K562 (cell line): ENCODE measurements at regions of chr10 and their contacts with region 1.

Region 1: GRCh38 chr10:104353325-104354048 is at the start of gene CFAP58:
- DNase-seq: peak; percentile 91 to 94 (median 92)
- ATAC-seq: peak; percentile 98
- H3K4me3 ChIP-seq: peak within 1 kb of the TSS; percentile 56
- H3K27ac ChIP-seq: peak within 1 kb of the TSS; percentile 53; the same call in 1 of the 3 replicates
- H3K4me1 ChIP-seq: peaks cover 5 to 24% of the 10 kb centered on the region in 2 experiments
- H3K27me3 ChIP-seq: no peaks in the 10 kb centered on the region
- CTCF ChIP-seq: peak; percentile 57 to 79 (median 76); a peak in 5 of 6 replicates
- EP300 ChIP-seq: no peak
- POLR2A ChIP-seq: peak; percentile 51; the same call in 1 of the 2 replicates
- RAD21 ChIP-seq: peak in 1 of 2 experiments; percentile 16; a peak in 1 of 4 replicates
- polyA plus RNA-seq, gene CFAP58: 0.08 to 0.52 TPM

Region 2: DNA sequence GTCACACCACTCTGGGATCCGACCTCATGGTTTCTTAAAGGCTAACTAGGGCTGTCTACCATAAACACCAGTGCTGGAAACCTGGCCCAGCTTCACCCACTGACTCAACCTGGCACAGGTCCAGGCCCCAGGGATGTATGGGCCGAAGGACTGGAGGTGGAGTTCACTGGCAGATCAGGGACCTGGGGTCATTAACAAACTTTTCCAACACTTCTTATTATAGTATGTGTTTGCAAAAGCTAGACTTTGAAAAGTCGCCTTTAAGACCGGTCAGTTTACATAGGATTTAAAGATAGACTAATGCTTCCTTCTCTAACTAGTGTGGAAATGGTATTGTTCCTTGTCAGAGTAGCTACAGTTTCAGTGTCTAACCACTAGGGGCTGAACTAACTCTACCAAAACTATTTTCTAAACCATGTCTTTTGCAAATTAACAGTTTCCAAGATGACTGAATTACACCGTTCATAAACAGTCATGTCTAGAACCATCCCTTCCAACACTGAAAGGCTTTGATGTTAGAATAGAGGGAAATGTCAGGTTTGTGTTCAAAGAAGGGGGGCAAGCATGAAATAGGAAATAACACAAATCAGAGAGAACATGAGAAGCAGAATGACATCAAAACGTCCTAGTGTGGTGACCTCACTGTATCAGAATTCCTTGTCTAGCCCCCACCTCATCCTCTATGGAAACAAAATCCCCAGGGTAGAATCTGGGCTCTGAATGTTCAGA is 465.2 kb before region 1 on chr10:
- CTCF ChIA-PET with region 1: no interaction called
- POLR2A ChIA-PET with region 1: no interaction called
- in situ Hi-C with region 1: no loop called
- intact Hi-C with region 1: loop called (anchors 5 kb)
- DNase-seq: peak; percentile 33 to 46 (median 38)
- ATAC-seq: peak; percentile 80
- H3K4me3 ChIP-seq: no peak overlapping the region
- H3K27ac ChIP-seq: no peak overlapping the region
- H3K4me1 ChIP-seq: no peaks in the 10 kb centered on the region
- H3K27me3 ChIP-seq: no peaks in the 10 kb centered on the region
- CTCF ChIP-seq: peak; percentile 37 to 81 (median 73); a peak in 5 of 6 replicates
- EP300 ChIP-seq: no peak
- POLR2A ChIP-seq: no peak
- RAD21 ChIP-seq: peak; percentile 76 to 88

Region 3: DNA sequence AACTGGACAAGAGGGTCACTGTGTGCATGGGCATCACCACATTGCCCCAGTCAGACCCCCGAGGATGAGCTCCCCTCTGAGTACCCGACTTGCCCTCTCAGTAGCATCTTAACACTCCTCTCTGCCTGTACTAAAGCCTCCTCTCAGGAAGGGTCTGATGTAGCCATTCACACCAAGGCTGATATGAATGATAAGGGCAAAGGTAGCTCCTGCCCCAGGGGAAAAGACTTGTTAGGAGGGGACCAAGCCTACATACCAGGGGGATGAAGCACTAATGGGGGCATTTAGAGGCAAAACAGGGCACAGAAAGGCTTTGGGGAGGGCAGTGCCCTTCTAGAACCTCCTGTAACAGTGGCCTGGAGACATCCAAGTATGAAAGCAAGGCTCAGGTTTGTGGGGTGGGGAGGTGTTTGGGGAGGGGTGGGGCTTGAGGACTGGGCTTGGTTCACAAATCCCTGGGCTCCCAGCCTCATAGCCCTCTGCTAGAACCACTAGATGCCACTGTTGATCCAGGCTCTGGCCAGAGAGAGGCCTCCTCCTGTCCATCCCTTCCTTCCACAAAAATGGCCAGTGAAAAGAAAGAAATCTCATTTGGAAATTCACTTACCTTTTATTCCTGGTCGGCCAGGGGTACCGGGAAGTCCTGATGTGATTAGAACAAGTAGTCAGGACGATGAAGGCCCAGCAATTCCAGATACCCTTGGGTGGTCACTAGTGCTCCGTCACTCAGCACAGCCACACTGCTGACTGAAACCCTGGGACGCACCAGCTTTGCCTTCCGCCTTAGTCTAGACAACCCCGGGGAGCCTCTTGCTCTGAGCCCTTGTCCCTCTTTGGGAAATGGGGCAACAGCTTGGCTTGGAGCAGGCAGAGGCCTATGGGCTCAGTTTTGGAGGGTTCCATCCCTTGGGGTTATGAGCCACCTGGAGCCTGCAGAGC is 308.1 kb before region 1 on chr10:
- CTCF ChIA-PET with region 1: no interaction called
- POLR2A ChIA-PET with region 1: no interaction called
- in situ Hi-C with region 1: no loop called
- intact Hi-C with region 1: loop called (anchors 5 kb)
- DNase-seq: peak; percentile 17 to 41 (median 30)
- ATAC-seq: peak; percentile 88
- H3K4me3 ChIP-seq: no peak overlapping the region
- H3K27ac ChIP-seq: no peak overlapping the region
- H3K4me1 ChIP-seq: no peaks in the 10 kb centered on the region; a peak in 1 of 5 replicates
- H3K27me3 ChIP-seq: peaks cover 9 to 78% of the 10 kb centered on the region in 2 experiments; a peak in 3 of 5 replicates
- CTCF ChIP-seq: peak; percentile 38 to 57 (median 44); a peak in 5 of 6 replicates
- EP300 ChIP-seq: no peak
- POLR2A ChIP-seq: no peak
- RAD21 ChIP-seq: peak; percentile 48 to 70

Region 4: GRCh38 chr10:104291439-104291951 is 62.0 kb before region 1 on chr10:
- CTCF ChIA-PET with region 1: interaction called, 63 read pairs
- POLR2A ChIA-PET with region 1: interaction called, 4 read pairs
- in situ Hi-C with region 1: loop called (anchors 10 kb)
- intact Hi-C with region 1: loop called (anchors 1 kb)
- DNase-seq: peak; percentile 84 to 86 (median 85)
- ATAC-seq: peak; percentile 98
- H3K4me3 ChIP-seq: no peak overlapping the region
- H3K27ac ChIP-seq: no peak overlapping the region
- H3K4me1 ChIP-seq: no peaks in the 10 kb centered on the region; a peak in 1 of 5 replicates
- H3K27me3 ChIP-seq: no peaks in the 10 kb centered on the region
- CTCF ChIP-seq: peak; percentile 98 to 99 (median 99)
- EP300 ChIP-seq: no peak
- POLR2A ChIP-seq: no peak
- RAD21 ChIP-seq: peak; percentile 80 to 88

Region 5: GRCh38 chr10:104304962-104305361 is 48.5 kb before region 1 on chr10:
- CTCF ChIA-PET with region 1: interaction called, 11 read pairs
- POLR2A ChIA-PET with region 1: interaction called, 3 read pairs
- in situ Hi-C with region 1: loop called (anchors 5 kb)
- intact Hi-C with region 1: loop called (anchors 1 kb)
- DNase-seq: no peak
- ATAC-seq: no peak
- H3K4me3 ChIP-seq: no peak overlapping the region
- H3K27ac ChIP-seq: no peak overlapping the region
- H3K4me1 ChIP-seq: no peaks in the 10 kb centered on the region; a peak in 3 of 5 replicates
- H3K27me3 ChIP-seq: no peaks in the 10 kb centered on the region
- CTCF ChIP-seq: no peak
- EP300 ChIP-seq: no peak
- POLR2A ChIP-seq: no peak
- RAD21 ChIP-seq: no peak

Region 6: GRCh38 chr10:104309976-104310674 is 43.4 kb before region 1 on chr10:
- CTCF ChIA-PET with region 1: interaction called, 11 read pairs
- POLR2A ChIA-PET with region 1: interaction called, 6 read pairs
- in situ Hi-C with region 1: loop called (anchors 5 kb)
- intact Hi-C with region 1: loop called (anchors 1 kb)
- DNase-seq: no peak
- ATAC-seq: peak; percentile 18
- H3K4me3 ChIP-seq: no peak overlapping the region
- H3K27ac ChIP-seq: no peak overlapping the region
- H3K4me1 ChIP-seq: no peaks in the 10 kb centered on the region; a peak in 3 of 5 replicates
- H3K27me3 ChIP-seq: no peaks in the 10 kb centered on the region
- CTCF ChIP-seq: no peak
- EP300 ChIP-seq: no peak
- POLR2A ChIP-seq: no peak
- RAD21 ChIP-seq: no peak

Region 7: GRCh38 chr10:104387130-104387888 is 33.8 kb after region 1 on chr10:
- CTCF ChIA-PET with region 1: no interaction called
- POLR2A ChIA-PET with region 1: no interaction called
- in situ Hi-C with region 1: no loop called
- intact Hi-C with region 1: no loop called
- DNase-seq: peak in 1 of 4 experiments; percentile 6
- ATAC-seq: peak; percentile 42; the same call in 1 of the 3 replicates
- H3K4me3 ChIP-seq: no peak overlapping the region
- H3K27ac ChIP-seq: no peak overlapping the region
- H3K4me1 ChIP-seq: 0 out of 5 replicates have a peak, but pooled peaks cover 0 to 3% of the 10 kb centered on the region in 2 experiments
- H3K27me3 ChIP-seq: no peaks in the 10 kb centered on the region
- CTCF ChIP-seq: no peak
- EP300 ChIP-seq: no peak
- POLR2A ChIP-seq: no peak
- RAD21 ChIP-seq: no peak